Naive thymus-derived CD4-positive, alpha-beta T cell (primary cell): ENCODE measurements at regions of chrX and their contacts with region 1.

Region 1: GRCh38 chrX:48897621-48898306 is at the starts of genes PQBP1 and TIMM17B:
- DNase-seq: peak; percentile 71 to 93 (median 89)
- ATAC-seq: peak; percentile 92
- H3K4me3 ChIP-seq: peak within 1 kb of the TSS; percentile 91
- H3K4me3 Mint-ChIP-seq: peak within 1 kb of the TSS; percentile 83 to 100 (median 91)
- H3K27ac ChIP-seq: peak within 1 kb of the TSS; percentile 98
- H3K27ac Mint-ChIP-seq: peak within 1 kb of the TSS; percentile 89 to 98 (median 94)
- H3K4me1 ChIP-seq: peaks cover 12 to 16% of the 10 kb centered on the region in 2 donors
- H3K4me1 Mint-ChIP-seq: peaks cover 6 to 42% (median 24%) of the 10 kb centered on the region in 7 donors
- H3K27me3 ChIP-seq: no peaks in the 10 kb centered on the region
- H3K27me3 Mint-ChIP-seq: no peaks in the 10 kb centered on the region
- total RNA-seq, gene PQBP1: 64.1 to 89.5 (median 74.6) TPM
- total RNA-seq, gene TIMM17B: 41.1 to 46.6 (median 44.2) TPM

Region 2: DNA sequence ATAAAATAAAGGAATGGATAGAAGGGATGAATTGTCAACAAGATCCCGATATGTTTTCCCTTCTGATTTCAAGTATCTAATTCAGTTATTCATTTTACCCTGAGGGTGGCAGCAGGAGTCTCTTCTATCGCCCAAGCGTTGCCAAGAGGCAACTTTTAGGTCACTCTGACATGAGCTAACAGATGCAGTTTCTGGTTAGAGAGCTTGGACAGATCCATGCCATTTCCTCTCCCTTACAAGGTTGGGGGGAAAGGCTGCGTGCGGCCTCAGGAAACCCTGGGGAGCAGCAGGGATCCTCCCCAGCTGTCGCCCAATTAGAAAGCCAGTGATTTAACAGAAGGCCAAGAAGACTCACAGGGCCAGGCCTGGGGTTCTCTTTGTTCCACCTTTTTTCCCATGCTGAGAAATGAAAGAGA is 249.4 kb before region 1 on chrX:
- CTCF ChIA-PET with region 1: interaction called, 5 read pairs
- POLR2A ChIA-PET with region 1: interaction called, 6 read pairs
- intact Hi-C with region 1: loop called in 1 of 2 experiments (anchors 5 kb)
- DNase-seq: peak in 8 of 9 donors; percentile 17 to 54 (median 38)
- ATAC-seq: peak; percentile 70
- H3K4me3 ChIP-seq: no peak overlapping the region
- H3K4me3 Mint-ChIP-seq: no peak overlapping the region
- H3K27ac ChIP-seq: no peak overlapping the region
- H3K27ac Mint-ChIP-seq: peak overlapping the region in 3 of 9 donors; percentile 42 to 58 (median 53)
- H3K4me1 ChIP-seq: no peaks in the 10 kb centered on the region
- H3K4me1 Mint-ChIP-seq: peaks cover 0 to 18% (median 13%) of the 10 kb centered on the region in 7 donors
- H3K27me3 ChIP-seq: no peaks in the 10 kb centered on the region
- H3K27me3 Mint-ChIP-seq: no peaks in the 10 kb centered on the region

Region 3: DNA sequence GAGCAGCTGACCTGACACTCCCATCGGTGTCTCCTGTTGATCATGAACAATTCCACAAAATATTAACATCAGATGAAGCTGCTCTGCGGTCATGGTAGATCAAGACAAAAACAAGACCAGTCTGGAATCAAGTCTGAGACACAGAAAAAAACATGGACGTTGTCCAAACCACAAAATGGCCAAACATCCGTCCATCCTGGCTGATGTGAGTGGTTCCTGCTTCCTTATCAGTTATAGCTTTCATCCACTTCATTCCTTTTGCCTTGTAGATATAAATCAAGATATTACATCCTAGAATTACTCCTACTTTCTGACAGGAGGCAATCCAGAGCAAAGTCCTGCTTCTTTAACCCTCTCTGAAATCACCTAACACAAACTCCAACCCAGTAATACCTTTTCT is 33.6 kb before region 1 on chrX:
- CTCF ChIA-PET with region 1: no interaction called
- POLR2A ChIA-PET with region 1: no interaction called
- intact Hi-C with region 1: no loop called
- DNase-seq: no peak
- ATAC-seq: no peak
- H3K4me3 ChIP-seq: no peak overlapping the region
- H3K4me3 Mint-ChIP-seq: no peak overlapping the region
- H3K27ac ChIP-seq: no peak overlapping the region
- H3K27ac Mint-ChIP-seq: no peak overlapping the region
- H3K4me1 ChIP-seq: no peaks in the 10 kb centered on the region
- H3K4me1 Mint-ChIP-seq: no peaks in the 10 kb centered on the region
- H3K27me3 ChIP-seq: no peaks in the 10 kb centered on the region
- H3K27me3 Mint-ChIP-seq: peaks cover 0 to 4% (median 0%) of the 10 kb centered on the region in 5 donors

Region 4: GRCh38 chrX:48911412-48912182 is 13.8 kb after region 1 on chrX and contains the start of gene SLC35A2:
- CTCF ChIA-PET with region 1: interaction called, 6 read pairs
- POLR2A ChIA-PET with region 1: interaction called, 29 read pairs
- intact Hi-C with region 1: loop called (anchors 1 kb)
- DNase-seq: peak; percentile 75 to 92 (median 90)
- ATAC-seq: peak; percentile 78
- H3K4me3 ChIP-seq: peak within 1 kb of the TSS; percentile 77
- H3K4me3 Mint-ChIP-seq: peak within 1 kb of the TSS; percentile 86 to 96 (median 90)
- H3K27ac ChIP-seq: peak within 1 kb of the TSS; percentile 76
- H3K27ac Mint-ChIP-seq: peak within 1 kb of the TSS; percentile 86 to 98 (median 96)
- H3K4me1 ChIP-seq: peaks cover 32 to 42% of the 10 kb centered on the region in 2 donors
- H3K4me1 Mint-ChIP-seq: peaks cover 20 to 61% (median 42%) of the 10 kb centered on the region in 7 donors
- H3K27me3 ChIP-seq: no peaks in the 10 kb centered on the region
- H3K27me3 Mint-ChIP-seq: peaks cover 0 to 3% (median 0%) of the 10 kb centered on the region in 5 donors
- total RNA-seq, gene SLC35A2: 13.9 to 36.7 (median 18.5) TPM

Region 5: DNA sequence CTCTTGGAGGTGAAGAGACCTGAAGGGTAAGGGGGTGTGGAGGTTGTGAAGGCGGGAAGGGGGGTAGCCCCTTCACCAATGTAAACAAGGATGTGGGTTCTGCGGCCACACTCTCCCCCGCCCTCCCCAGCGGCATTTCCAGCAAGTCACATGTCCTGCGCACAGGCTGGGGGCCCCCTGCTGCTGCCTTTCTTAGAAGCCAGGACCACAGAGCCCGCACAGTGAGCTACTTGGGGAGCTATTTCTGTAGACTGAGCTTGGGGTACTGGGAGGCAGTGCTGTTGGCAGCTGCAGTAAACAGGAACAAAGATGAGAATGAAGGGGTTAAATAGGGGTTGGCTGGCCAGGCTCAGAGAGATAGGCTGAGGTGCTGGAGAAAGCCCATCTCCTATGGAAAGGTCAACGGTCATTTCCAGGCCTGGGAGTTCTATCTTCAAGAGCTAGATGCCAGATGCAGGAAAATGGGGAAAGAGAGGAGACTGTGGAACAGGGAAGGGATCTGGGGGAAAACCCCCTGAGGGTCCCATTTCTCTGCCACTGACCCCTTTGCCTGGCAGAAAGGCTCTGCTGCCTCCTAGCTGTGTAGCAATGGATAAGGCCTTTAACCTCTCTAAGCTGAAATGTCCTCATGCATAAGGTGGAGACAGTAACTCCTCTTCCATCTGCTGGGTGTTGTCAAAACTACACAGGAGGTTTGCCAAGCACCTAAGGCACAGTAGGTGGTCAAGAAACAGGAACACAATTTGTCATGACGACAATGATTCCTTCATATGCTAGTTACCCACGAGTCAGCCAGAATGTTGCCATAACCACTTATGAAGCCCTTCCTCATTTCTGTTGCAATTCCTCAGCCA is 39.5 kb after region 1 on chrX:
- CTCF ChIA-PET with region 1: interaction called, 7 read pairs
- POLR2A ChIA-PET with region 1: interaction called, 48 read pairs
- intact Hi-C with region 1: loop called (anchors 1 kb)
- DNase-seq: peak; percentile 59 to 96 (median 92)
- ATAC-seq: peak; percentile 75
- H3K4me3 ChIP-seq: peak overlapping the region; percentile 70
- H3K4me3 Mint-ChIP-seq: peak overlapping the region; percentile 78 to 96 (median 88)
- H3K27ac ChIP-seq: peak overlapping the region; percentile 97
- H3K27ac Mint-ChIP-seq: peak overlapping the region; percentile 96 to 99 (median 99)
- H3K4me1 ChIP-seq: peaks cover 69 to 80% of the 10 kb centered on the region in 2 donors
- H3K4me1 Mint-ChIP-seq: peaks cover 36 to 91% (median 80%) of the 10 kb centered on the region in 7 donors
- H3K27me3 ChIP-seq: no peaks in the 10 kb centered on the region
- H3K27me3 Mint-ChIP-seq: peaks cover 0 to 3% (median 0%) of the 10 kb centered on the region in 5 donors

Region 6: DNA sequence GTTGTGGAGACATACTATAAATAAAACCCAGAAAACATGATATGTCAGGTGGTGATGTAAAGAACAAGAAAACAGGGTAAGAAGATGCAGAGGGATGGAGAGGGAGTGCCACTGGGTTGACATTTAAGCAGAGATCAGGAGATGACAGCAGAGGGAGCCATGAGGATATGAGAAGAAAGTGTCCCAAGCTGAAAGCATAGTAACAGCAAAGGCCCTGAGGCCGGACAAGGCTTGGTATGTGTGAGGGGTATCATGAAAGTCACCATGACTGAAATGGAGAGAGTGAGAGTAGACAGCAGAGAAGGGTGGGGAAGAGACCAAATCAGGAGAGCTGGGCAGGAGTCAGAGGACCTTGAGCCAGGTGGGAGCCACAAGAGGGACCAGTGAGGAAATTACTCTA is 222.3 kb after region 1 on chrX:
- CTCF ChIA-PET with region 1: no interaction called
- POLR2A ChIA-PET with region 1: no interaction called
- intact Hi-C with region 1: loop called in 1 of 2 experiments (anchors 10 kb)
- DNase-seq: no peak
- ATAC-seq: no peak
- H3K4me3 ChIP-seq: no peak overlapping the region
- H3K4me3 Mint-ChIP-seq: peak overlapping the region in 3 of 10 donors; percentile 9 to 24 (median 12)
- H3K27ac ChIP-seq: no peak overlapping the region
- H3K27ac Mint-ChIP-seq: peak overlapping the region in 2 of 9 donors; percentile 12 to 30
- H3K4me1 ChIP-seq: peaks cover 16 to 18% of the 10 kb centered on the region in 2 donors
- H3K4me1 Mint-ChIP-seq: peaks cover 32 to 59% (median 37%) of the 10 kb centered on the region in 7 donors
- H3K27me3 ChIP-seq: no peaks in the 10 kb centered on the region
- H3K27me3 Mint-ChIP-seq: no peaks in the 10 kb centered on the region